ENCODE measurements at regions of chr14 and their contacts with region 1.

Region 1: DNA sequence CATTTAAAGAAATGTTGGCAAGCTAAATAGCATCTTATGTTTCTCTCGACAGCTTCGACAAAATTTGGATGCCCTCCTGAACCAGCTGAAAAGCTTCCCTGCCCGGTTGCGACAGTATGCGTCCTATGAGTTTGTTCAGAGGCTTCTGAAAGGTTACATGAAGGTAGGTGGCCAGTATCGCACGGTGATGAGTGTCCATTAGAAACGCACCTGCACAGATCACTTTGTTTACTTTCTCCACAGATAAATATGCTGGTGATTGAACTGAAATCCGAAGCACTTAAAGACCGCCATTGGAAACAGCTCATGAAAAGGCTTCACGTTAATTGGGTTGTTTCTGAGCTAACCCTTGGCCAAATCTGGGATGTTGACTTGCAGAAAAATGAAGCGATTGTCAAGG is 36.5 kb downstream of the DYNC1H1 start:
- DNase-seq: no peak
- ATAC-seq: no peak
- H3K4me3 ChIP-seq: no peak overlapping the region
- H3K27ac ChIP-seq: no peak overlapping the region
- H3K4me1 ChIP-seq: no peaks in the 10 kb centered on the region
- H3K27me3 ChIP-seq: no peaks in the 10 kb centered on the region
- CTCF ChIP-seq: no peak
- POLR2A ChIP-seq: no peak
- RAD21 ChIP-seq: no peak

Region 2: GRCh38 chr14:101865288-101865687 is 135.6 kb before region 1 on chr14:
- CTCF ChIA-PET with region 1: no interaction called
- POLR2A ChIA-PET with region 1: no interaction called
- RAD21 ChIA-PET with region 1: no interaction called
- intact Hi-C with region 1: no loop called
- DNase-seq: no peak
- ATAC-seq: no peak
- H3K4me3 ChIP-seq: no peak overlapping the region
- H3K27ac ChIP-seq: no peak overlapping the region
- H3K4me1 ChIP-seq: no peaks in the 10 kb centered on the region; a peak in 1 of 4 replicates
- H3K27me3 ChIP-seq: no peaks in the 10 kb centered on the region
- CTCF ChIP-seq: no peak
- POLR2A ChIP-seq: no peak
- RAD21 ChIP-seq: no peak

Region 3: GRCh38 chr14:102039157-102039556 is 38.3 kb after region 1 on chr14:
- CTCF ChIA-PET with region 1: no interaction called
- POLR2A ChIA-PET with region 1: no interaction called
- RAD21 ChIA-PET with region 1: no interaction called
- intact Hi-C with region 1: loop called (anchors 5 kb)
- DNase-seq: no peak
- ATAC-seq: no peak
- H3K4me3 ChIP-seq: no peak overlapping the region
- H3K27ac ChIP-seq: no peak overlapping the region
- H3K4me1 ChIP-seq: no peaks in the 10 kb centered on the region
- H3K27me3 ChIP-seq: no peaks in the 10 kb centered on the region
- CTCF ChIP-seq: no peak
- POLR2A ChIP-seq: no peak
- RAD21 ChIP-seq: no peak

Region 4: GRCh38 chr14:102555264-102555831 is 554.4 kb after region 1 on chr14:
- CTCF ChIA-PET with region 1: no interaction called
- POLR2A ChIA-PET with region 1: no interaction called
- RAD21 ChIA-PET with region 1: no interaction called
- intact Hi-C with region 1: no loop called
- DNase-seq: no peak
- ATAC-seq: no peak
- H3K4me3 ChIP-seq: no peak overlapping the region
- H3K27ac ChIP-seq: no peak overlapping the region
- H3K4me1 ChIP-seq: peaks cover 12 to 39% of the 10 kb centered on the region in 2 experiments
- H3K27me3 ChIP-seq: no peaks in the 10 kb centered on the region
- CTCF ChIP-seq: no peak
- POLR2A ChIP-seq: no peak
- RAD21 ChIP-seq: no peak